ENCODE measurements at regions of chr11 and their contacts with region 1.

Region 1: GRCh38 chr11:62905927-62906531 is 15.1 kb downstream of the CHRM1 start:
- DNase-seq: peak; percentile 77
- ATAC-seq: peak; percentile 80 to 84

Region 2: DNA sequence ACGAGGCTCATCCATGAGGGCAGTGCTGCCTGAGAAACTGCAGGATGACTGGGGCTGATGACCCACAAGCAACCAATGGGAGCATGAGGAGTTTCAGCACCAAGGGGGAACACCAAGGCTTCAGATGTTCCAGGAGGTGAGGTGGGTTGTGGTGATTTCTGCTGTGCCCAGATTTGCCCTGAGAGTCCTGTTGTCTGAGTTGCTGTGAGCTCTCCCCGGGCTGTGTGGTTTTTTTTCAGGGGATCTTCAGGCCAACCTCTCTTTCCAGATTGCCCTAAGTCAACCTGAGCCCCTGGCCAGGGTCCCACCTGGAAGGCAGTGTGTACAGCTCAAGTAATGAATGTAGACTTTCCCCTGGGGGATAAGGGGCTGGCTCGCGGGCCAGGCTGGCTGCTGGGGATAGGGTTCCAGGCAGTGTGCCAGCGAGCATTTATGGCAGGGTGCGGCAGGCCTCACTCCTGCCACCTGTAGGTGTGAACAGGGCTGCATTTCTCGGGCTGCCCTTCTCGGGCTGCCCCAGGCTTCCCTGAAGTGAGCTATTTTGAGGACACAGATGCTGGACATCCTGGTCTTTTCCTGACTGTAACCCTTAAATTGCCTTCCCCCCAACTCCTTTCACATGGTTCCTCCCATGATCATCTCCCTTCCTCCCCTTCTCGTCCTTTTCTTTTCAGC is 69.0 kb after region 1 on chr11:
- intact Hi-C with region 1: loop called in 1 of 2 experiments (anchors 5 kb)
- DNase-seq: peak; percentile 69
- ATAC-seq: peak; percentile 89 to 90

Region 3: DNA sequence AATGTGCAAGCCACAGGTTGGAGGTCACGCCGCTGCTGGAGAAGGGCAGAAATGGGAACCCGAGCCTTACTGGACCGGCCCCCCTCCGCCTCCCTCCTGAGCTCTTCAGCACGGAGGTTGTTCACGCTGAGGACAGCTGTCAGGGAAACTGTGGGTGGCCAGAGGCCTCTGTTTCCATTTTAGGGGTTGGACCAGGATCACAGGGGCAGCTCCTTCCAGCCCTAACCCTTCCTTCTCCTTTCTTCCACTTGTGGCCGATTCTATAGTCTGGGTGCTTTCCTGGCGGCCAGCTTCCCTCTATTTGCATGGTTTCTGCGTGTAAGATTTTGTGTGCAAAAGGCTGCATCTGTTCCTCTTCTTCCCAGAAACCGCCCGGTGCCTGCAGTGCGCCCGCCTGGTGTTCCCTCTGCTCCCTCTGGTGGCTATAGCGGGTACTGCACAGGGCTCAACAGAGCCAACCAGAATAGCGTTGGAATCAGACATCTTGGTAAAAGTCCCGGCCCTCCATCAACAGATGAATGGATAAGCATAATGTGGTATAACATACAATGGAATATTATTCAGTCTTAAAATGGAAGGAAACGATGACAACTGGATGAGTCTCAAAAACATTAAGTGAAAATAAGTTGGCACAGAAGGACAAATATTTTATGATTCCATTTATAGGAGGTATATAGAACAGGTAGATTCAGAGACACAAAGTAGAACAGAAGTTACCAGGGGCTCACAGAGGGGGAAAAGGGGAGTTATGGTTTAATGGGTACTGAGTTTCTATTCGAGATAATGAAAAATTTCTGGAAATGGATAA is 118.0 kb after region 1 on chr11:
- intact Hi-C with region 1: loop called (anchors 1 to 2 kb)
- DNase-seq: peak; percentile 90
- ATAC-seq: peak; percentile 93 to 94

Measured in left cardiac atrium (tissue), 4 donors.